ENCODE measurements at regions of chr1 and their contacts with region 1.

Region 1: GRCh38 chr1:150876119-150876454 is 312 bp downstream of the ARNT start:
- DNase-seq: no peak
- H3K4me3 Mint-ChIP-seq: peak overlapping the region; percentile 86
- H3K27ac Mint-ChIP-seq: peak overlapping the region; percentile 88
- H3K4me1 Mint-ChIP-seq: peaks cover 34% of the 10 kb centered on the region
- H3K27me3 Mint-ChIP-seq: no peaks in the 10 kb centered on the region

Region 2: DNA sequence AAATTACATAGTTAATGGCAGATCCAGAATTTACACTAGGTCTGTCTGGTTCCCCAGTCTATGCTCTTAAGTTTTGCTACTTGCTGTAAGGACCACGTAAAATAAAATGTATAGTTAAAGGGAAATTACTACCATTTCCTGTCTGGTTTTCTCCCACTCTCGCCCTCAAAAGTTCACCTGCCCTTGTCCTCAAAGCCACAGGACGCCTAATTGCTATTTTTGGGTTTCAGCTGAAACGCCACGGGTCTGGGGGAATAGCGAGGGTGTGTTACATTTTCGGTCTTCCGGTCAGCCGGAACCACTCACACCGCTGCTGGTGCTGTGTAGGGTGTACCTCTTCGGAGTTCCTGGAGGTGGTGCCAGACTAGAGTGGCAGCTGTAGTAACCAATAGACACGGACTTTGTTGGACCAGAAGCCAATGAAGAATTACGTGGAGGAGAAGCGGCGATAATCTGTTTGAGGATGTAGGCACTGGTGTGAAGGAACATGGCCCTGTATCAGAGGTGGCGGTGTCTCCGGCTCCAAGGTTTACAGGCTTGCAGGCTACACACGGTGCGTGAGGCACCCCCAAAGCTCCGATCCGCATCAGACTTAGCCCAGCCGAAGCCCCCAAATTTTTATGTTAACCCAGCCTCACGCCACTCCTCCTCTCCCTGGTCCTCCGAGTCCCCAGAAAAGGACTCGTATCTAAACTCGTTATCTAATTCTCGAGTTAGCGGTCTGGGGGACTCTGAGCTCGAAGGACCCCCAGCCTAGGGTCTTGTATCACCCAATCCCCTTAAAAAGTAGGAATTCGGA is 388.9 kb before region 1 on chr1 and contains the start of gene TARS2:
- intact Hi-C with region 1: loop called (anchors 1 kb)
- DNase-seq: peak; percentile 94
- H3K4me3 Mint-ChIP-seq: peak within 1 kb of the TSS; percentile 98
- H3K27ac Mint-ChIP-seq: peak within 1 kb of the TSS; percentile 95
- H3K4me1 Mint-ChIP-seq: peaks cover 35% of the 10 kb centered on the region
- H3K27me3 Mint-ChIP-seq: no peaks in the 10 kb centered on the region
- total RNA-seq, gene TARS2: 77.3 and 77.4 TPM in 2 replicates

Region 3: GRCh38 chr1:150696590-150697524 is 179.2 kb before region 1 on chr1 and contains the start of gene GOLPH3L:
- intact Hi-C with region 1: loop called (anchors 1 kb)
- DNase-seq: peak; percentile 89
- H3K4me3 Mint-ChIP-seq: peak within 1 kb of the TSS; percentile 91
- H3K27ac Mint-ChIP-seq: peak within 1 kb of the TSS; percentile 85
- H3K4me1 Mint-ChIP-seq: peaks cover 33% of the 10 kb centered on the region
- H3K27me3 Mint-ChIP-seq: peaks cover 12% of the 10 kb centered on the region
- total RNA-seq, gene GOLPH3L: 19.1 and 20.5 TPM in 2 replicates

Region 4: GRCh38 chr1:150890033-150890416 is 13.9 kb after region 1 on chr1:
- intact Hi-C with region 1: loop called (anchors 1 kb)
- DNase-seq: no peak
- H3K4me3 Mint-ChIP-seq: peak overlapping the region; percentile 48
- H3K27ac Mint-ChIP-seq: peak overlapping the region; percentile 86
- H3K4me1 Mint-ChIP-seq: peaks cover 20% of the 10 kb centered on the region
- H3K27me3 Mint-ChIP-seq: peaks cover 2% of the 10 kb centered on the region

Region 5: DNA sequence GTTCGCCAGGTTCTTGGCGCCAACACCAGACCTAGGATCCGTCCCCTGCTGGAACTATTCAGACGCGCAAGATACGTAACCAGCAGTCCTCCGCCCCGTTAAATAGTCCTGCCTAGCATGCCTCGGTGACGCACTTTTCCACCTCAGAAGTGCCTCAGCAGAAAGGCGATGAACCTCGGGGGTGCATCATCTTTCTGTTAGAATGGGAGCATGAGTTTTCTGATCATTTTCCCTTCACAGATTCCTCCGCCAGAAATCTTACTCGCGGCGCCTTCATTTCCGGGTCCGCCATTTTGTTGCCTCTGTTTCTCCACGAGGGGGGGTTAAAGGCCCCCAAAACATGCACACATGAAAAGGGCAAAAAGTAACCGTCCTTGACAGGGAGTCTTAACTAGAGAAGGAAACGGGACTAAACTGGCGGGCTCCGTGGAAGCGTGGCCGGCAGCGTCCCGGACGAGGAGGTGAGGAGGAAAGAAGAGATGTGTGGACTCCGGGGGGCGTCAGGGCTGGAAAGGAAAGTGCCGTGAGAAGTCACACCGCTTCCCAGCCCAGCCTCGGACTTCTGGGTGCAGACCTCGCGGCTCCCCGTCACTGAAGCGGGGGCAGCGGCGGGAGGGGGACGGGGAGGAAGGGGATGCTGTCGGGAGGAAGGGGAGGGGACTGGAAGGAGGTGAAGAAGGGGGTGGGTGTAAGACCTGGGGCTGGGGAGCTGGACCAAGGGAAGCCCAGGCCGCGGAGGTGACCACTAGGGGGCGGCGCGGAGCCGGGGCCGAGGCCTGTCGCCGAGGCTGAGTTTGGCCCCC is 194.6 kb after region 1 on chr1 and contains the start of gene GABPB2:
- intact Hi-C with region 1: loop called (anchors 1 kb)
- DNase-seq: peak; percentile 81
- H3K4me3 Mint-ChIP-seq: peak within 1 kb of the TSS; percentile 98
- H3K27ac Mint-ChIP-seq: peak within 1 kb of the TSS; percentile 100
- H3K4me1 Mint-ChIP-seq: peaks cover 17% of the 10 kb centered on the region
- H3K27me3 Mint-ChIP-seq: no peaks in the 10 kb centered on the region
- total RNA-seq, gene GABPB2: 19.4 and 21.5 TPM in 2 replicates

Measured in activated T-helper 1 cell treated with anti-CD3 and anti-CD28 coated beads, Interleukin-12 subunit alpha, Interleukin-12 subunit beta, Interleukin-2, Interleukin-4 antibody, amounts not matched to agents 30 ng/mL and 10 ng/mL and 1 ng/mL, durations not matched to agents 14 hours and 24 hours and 36 hours (primary cell).